Activated CD8-positive, alpha-beta T cell treated with anti-CD3 and anti-CD28 coated beads for 36 hours (primary cell): ENCODE measurements at regions of chr14 and their contacts with region 1.

Region 1: DNA sequence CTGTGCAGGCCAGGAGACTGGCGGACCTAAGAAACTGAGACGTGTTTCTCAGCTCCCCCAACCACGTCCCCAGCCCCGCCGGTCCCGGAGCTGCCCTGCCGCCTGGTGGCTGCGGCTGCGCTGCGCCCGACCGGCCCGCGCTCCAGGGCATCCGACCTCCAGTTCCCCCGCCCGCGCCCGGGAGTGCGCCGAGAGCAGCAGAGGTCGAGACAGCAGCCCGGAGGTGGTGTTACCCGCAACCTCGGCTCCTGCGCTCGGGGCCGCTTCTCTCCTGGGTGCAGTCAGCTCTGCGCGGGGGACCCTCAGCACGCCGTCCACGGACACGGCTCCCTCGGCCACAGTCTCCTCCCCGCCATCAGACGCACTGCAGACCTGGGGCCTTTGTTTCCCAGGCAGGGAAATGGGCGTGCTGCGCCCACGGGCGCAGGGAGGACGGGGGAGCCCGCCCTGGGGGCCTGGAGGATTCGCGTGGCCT is 21.6 kb upstream of the GPR132 start:
- DNase-seq: peak; percentile 93
- ATAC-seq: peak; percentile 90
- H3K4me3 Mint-ChIP-seq: peak overlapping the region; percentile 72
- H3K27ac Mint-ChIP-seq: no peak overlapping the region
- H3K4me1 Mint-ChIP-seq: peaks cover 16% of the 10 kb centered on the region
- H3K27me3 Mint-ChIP-seq: no peaks in the 10 kb centered on the region
- CTCF ChIP-seq: peak; percentile 87

Region 2: DNA sequence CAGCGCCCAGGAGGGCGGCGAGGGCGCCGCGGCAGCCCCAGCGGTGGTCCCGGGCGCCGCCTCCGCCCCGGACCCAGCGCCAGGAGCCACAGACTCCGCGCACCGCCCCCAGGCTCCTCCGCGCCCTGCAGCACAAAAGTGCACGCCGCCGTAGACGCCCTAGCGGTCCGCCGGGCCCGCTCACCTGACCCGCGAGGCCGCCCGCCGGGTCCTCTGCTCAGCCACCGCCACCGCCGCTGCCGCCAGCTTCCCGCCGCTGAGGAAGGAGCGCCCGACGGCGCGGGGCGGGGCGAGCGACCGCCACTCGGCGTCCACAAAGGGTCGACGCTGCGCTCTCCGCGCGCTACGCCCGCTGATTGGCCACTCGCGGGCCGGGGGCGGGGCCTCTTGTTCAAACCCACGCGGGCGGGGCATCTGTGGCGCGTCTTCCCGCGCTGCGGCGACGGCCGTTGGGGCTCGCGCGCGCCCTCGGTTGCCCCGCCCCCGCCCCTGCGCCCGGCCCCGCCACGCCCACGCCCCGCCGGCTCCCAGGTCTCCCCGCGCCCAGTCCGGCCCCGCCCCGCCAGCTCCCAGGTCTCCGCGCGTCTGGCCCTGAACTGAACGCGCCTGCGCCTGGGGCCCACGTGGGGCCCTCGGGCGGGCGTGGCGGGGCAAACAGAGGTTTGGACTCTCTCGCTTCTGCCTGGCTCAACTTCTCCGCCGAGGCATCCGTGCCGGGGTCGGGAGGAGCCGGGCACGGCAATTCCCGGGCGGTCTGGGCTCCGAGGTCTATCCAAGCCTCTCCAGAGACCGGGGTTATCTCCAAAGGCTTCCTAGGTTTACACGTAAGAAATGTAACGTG is 65.8 kb before region 1 on chr14 and contains the start of gene CDCA4:
- CTCF ChIA-PET with region 1: interaction called, 13 read pairs
- POLR2A ChIA-PET with region 1: interaction called, 5 read pairs
- intact Hi-C with region 1: no loop called
- DNase-seq: peak; percentile 98
- ATAC-seq: peak; percentile 85
- H3K4me3 Mint-ChIP-seq: peak within 1 kb of the TSS; percentile 99
- H3K27ac Mint-ChIP-seq: peak within 1 kb of the TSS; percentile 95
- H3K4me1 Mint-ChIP-seq: peaks cover 65% of the 10 kb centered on the region
- H3K27me3 Mint-ChIP-seq: no peaks in the 10 kb centered on the region
- CTCF ChIP-seq: peak; percentile 10
- total RNA-seq, gene CDCA4: 59.4 to 63.5 TPM

Region 3: GRCh38 chr14:105059035-105059924 is 27.6 kb before region 1 on chr14:
- CTCF ChIA-PET with region 1: interaction called, 72 read pairs
- POLR2A ChIA-PET with region 1: interaction called, 33 read pairs
- intact Hi-C with region 1: no loop called
- DNase-seq: peak; percentile 90
- ATAC-seq: peak; percentile 65
- H3K4me3 Mint-ChIP-seq: peak overlapping the region; percentile 86
- H3K27ac Mint-ChIP-seq: peak overlapping the region; percentile 96
- H3K4me1 Mint-ChIP-seq: peaks cover 50% of the 10 kb centered on the region
- H3K27me3 Mint-ChIP-seq: no peaks in the 10 kb centered on the region
- CTCF ChIP-seq: peak; percentile 34

Region 4: DNA sequence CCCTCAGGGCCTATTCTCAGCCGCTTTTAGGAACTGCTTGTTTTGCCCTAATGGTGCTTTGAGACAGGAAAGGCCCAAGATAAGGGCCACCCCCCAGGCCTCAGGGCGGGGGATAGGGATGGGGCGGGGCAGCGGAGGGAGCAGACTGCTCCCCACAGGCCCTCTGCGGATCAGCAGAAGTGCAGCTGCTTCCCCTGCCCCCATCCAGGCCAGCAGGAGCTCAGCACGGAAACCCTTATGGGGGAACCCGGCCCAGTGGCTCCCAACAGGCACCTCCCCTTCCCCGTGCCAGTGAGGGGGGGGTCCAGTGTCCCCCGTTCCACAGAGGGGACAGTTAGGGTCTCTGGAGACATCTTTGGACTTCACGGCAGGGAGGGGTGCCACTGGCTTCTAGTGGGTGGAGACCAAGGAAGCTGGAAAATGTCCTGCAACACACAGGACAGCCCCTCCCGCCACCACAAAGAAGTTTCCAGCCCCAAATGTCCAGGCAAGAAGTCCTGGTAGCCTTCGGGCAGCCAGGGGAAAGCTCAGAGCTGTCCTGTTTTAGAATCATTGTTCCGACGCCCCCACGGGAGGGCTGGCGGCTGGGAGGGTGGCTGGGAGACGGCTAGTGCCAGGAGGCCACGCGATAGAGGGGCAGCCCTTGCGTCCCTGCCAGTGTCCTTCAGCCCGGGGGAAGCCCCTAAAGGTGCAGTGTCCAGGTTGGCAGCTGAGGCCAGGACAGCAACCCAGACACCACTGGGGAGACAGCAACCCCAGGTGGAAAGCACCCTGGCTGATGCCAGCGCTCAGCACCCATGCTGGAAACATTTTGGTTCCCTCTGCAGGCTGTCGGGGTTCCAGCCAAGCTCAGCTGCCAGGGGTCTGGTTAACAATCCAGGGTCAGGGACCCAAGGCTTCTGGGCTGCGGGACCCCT is 11.2 kb before region 1 on chr14:
- CTCF ChIA-PET with region 1: interaction called, 39 read pairs
- POLR2A ChIA-PET with region 1: interaction called, 10 read pairs
- intact Hi-C with region 1: no loop called
- DNase-seq: peak; percentile 77
- ATAC-seq: peak; percentile 81
- H3K4me3 Mint-ChIP-seq: no peak overlapping the region
- H3K27ac Mint-ChIP-seq: peak overlapping the region; percentile 74
- H3K4me1 Mint-ChIP-seq: peaks cover 33% of the 10 kb centered on the region
- H3K27me3 Mint-ChIP-seq: no peaks in the 10 kb centered on the region
- CTCF ChIP-seq: no peak

Region 5: DNA sequence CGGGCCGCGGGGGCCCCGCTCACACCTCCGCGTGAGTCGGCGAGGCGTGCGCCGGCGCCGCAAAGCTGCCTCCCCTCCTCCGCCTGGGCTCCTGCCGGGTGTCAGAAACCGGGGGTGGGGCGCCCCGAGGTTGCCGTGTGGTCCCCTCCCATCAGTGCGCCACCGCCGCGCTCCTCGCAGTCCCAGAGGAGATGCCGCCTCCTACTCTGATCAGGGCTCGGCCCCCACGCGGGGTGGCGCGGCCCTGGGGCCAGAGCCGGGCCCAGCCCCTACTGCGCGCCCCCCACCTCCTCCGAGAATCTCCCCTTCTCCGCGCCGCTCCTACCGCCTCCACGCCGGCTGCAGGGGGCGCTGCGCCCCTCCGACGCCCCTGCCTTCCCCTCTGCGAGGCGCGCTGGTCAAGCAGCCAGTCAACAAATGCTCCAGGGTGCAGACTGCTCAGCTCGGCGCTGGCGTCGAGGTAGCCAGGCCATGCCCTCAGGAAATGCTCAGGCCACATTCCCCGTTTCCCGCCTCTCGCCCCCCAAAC is 82.2 kb after region 1 on chr14:
- CTCF ChIA-PET with region 1: interaction called, 12 read pairs
- POLR2A ChIA-PET with region 1: interaction called, 3 read pairs
- intact Hi-C with region 1: no loop called
- DNase-seq: peak; percentile 62
- ATAC-seq: peak; percentile 57
- H3K4me3 Mint-ChIP-seq: peak overlapping the region; percentile 46
- H3K27ac Mint-ChIP-seq: no peak overlapping the region
- H3K4me1 Mint-ChIP-seq: peaks cover 2% of the 10 kb centered on the region
- H3K27me3 Mint-ChIP-seq: peaks cover 19% of the 10 kb centered on the region
- CTCF ChIP-seq: peak; percentile 86

Region 6: GRCh38 chr14:105351920-105352851 is 265.3 kb after region 1 on chr14:
- CTCF ChIA-PET with region 1: interaction called, 8 read pairs
- POLR2A ChIA-PET with region 1: no interaction called
- intact Hi-C with region 1: loop called (anchors 5 kb)
- DNase-seq: peak; percentile 94
- ATAC-seq: peak; percentile 100
- H3K4me3 Mint-ChIP-seq: no peak overlapping the region
- H3K27ac Mint-ChIP-seq: no peak overlapping the region
- H3K4me1 Mint-ChIP-seq: peaks cover 2% of the 10 kb centered on the region
- H3K27me3 Mint-ChIP-seq: no peaks in the 10 kb centered on the region
- CTCF ChIP-seq: peak; percentile 75